ENCODE measurements at regions of chr7 and their contacts with region 1.

Region 1: GRCh38 chr7:105298439-105298907 is 90.2 kb downstream of the SRPK2 start:
- DNase-seq: peak; percentile 76
- H3K4me3 Mint-ChIP-seq: peak overlapping the region; percentile 50
- H3K27ac Mint-ChIP-seq: peak overlapping the region; percentile 72
- H3K4me1 Mint-ChIP-seq: peaks cover 38% of the 10 kb centered on the region
- H3K27me3 Mint-ChIP-seq: no peaks in the 10 kb centered on the region

Region 2: DNA sequence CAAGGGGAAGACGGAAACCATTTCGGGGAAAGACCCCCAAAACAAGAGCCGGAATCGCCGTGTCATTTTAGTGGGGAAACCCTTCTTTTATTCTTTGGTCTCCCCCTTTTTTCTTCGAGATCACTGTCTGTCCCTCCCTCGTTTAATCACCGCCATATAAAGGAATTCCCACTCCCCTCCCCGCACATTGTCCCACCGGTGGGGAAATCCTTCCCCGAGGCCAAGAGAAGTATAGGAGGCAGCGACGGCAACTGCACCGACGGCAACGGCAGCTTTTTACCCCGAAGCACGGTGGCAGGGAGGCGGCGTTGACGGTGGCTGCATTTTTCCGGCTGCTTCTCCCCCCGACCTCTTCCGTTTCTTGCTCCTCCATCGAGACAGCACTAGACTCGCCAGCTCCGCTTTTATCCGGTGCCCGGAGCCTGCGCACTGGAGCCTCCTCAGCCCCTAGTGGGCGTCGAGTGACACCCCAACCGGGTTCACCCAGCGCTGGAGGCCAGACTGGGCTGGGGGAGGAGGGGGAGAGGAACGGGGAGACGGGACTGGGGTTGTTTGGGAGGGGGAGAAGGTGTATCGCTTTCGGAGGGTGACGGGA is 285.2 kb before region 1 on chr7:
- intact Hi-C with region 1: loop called (anchors 10 kb)
- DNase-seq: peak; percentile 98
- H3K4me3 Mint-ChIP-seq: peak overlapping the region; percentile 99
- H3K27ac Mint-ChIP-seq: peak overlapping the region; percentile 100
- H3K4me1 Mint-ChIP-seq: peaks cover 43% of the 10 kb centered on the region
- H3K27me3 Mint-ChIP-seq: peaks cover 2% of the 10 kb centered on the region

Region 3: DNA sequence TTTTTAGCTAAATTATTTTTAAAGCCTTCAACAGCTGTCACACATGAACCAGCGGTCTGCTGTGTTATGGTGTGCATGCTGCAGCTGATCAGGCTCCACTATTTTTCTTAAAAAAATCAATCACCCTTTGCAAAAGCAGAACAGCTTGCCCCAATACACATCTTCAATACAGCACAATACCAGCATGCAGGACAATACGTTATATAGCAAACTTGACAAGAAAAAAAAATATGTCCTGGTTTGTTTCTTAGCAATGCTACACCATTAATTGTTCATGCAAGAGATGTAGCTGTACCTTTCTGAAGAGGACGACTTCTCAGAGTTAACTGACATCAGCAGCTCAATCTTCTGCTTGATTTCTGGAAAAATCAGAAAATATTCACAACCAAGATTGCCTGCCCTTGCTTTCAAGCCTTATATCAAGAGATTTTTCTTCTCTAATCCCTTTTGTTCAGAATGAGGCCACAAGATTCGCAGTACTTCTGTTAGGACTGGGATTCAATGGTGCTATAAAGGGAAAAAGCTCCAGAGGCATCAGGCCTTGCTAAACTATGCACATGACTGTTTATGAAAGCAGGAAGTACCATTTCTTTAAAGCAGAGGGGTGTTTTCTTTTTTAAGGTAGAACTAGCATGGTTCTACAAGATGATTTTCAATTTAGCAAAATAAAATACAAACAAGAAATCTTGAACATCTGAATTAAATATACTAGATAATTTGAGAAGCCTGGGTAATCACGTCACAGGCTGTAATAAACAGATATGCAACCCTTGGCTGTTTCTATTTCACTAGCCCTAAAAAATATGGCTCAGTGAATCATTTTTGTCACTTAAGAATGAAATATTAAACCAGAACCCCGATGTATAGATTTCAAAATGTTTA is 29.7 kb before region 1 on chr7:
- intact Hi-C with region 1: no loop called
- DNase-seq: peak; percentile 68
- H3K4me3 Mint-ChIP-seq: peak overlapping the region; percentile 83
- H3K27ac Mint-ChIP-seq: peak overlapping the region; percentile 67
- H3K4me1 Mint-ChIP-seq: peaks cover 19% of the 10 kb centered on the region
- H3K27me3 Mint-ChIP-seq: no peaks in the 10 kb centered on the region

Region 4: DNA sequence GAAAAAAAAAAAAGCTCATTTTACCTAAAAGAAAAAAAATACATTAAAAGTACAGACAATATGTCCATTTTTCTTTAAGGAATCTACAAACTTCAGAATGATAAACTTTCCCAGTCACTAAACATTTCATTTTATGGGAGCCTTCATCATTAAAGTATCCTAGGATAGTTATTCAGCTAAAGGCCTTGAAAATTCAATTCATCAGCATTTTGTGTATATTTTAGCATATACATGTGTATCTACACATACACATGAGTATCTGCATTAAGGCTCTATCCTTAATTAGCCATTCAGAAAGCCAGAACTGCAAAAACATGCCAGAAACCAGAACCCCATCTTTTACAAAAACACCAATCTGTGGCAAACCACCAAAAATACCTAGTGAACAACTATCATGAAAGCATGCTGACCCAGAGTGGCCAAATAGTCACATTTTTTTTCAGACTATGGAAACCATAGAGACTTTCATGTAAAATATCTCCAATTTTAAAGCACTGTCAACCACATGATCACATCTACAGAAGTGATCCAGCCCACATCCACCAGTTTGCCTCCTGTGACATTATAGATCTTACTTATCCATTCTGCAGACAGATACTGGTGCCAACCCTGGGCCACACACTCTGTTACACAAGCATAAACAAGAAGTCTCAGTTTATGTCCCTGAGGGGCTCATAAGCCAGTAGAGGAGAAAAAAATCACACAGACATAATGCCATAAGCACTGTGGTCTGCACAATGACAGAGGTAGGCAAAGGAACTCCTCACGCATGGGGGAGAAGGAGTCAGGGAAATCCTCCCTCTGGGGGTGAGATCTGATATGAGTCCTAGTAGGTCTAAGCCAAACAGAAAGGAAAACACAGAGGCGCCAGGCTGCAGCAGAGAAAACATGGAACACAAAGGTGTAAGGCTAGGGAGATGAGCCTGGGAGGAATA is 11.0 kb after region 1 on chr7:
- intact Hi-C with region 1: loop called (anchors 1 kb)
- DNase-seq: no peak
- H3K4me3 Mint-ChIP-seq: no peak overlapping the region
- H3K27ac Mint-ChIP-seq: no peak overlapping the region
- H3K4me1 Mint-ChIP-seq: peaks cover 46% of the 10 kb centered on the region
- H3K27me3 Mint-ChIP-seq: no peaks in the 10 kb centered on the region

Region 5: DNA sequence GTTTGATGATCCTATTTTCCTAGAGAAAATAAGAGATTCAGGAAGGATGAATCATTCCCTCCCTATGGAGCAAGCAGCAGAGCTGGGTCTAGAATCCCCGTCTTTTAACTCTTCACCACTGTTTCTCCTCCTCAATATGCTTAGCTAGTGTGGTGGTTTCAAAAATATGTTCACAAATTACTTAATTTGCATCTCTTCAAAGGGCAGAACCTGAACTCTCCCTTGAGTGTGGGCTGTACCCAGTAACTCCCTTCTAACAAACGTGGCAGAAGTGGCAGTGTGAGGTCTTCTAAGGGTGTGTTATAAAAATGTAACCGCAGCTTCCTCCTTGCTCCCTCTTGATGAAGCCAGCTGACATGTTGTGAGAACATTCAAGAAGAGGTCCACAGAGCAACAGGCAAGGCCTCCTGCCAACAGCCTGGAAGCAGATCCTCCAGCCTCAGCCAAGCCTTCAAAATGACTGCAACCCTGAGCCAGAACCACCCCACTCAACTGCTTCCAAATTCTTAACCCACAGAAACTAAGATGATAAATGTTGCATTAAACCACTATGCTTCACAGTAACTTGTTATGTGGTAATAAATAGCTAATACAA is 53.6 kb after region 1 on chr7:
- intact Hi-C with region 1: loop called (anchors 2 kb)
- DNase-seq: peak; percentile 88
- H3K4me3 Mint-ChIP-seq: peak overlapping the region; percentile 72
- H3K27ac Mint-ChIP-seq: peak overlapping the region; percentile 87
- H3K4me1 Mint-ChIP-seq: peaks cover 46% of the 10 kb centered on the region
- H3K27me3 Mint-ChIP-seq: no peaks in the 10 kb centered on the region

Region 6: GRCh38 chr7:105429746-105430612 is 131.5 kb after region 1 on chr7:
- intact Hi-C with region 1: loop called (anchors 2 kb)
- DNase-seq: peak; percentile 83
- H3K4me3 Mint-ChIP-seq: no peak overlapping the region
- H3K27ac Mint-ChIP-seq: no peak overlapping the region
- H3K4me1 Mint-ChIP-seq: peaks cover 6% of the 10 kb centered on the region
- H3K27me3 Mint-ChIP-seq: no peaks in the 10 kb centered on the region